ENCODE measurements at regions of chr11 and their contacts with region 1.

Region 1: DNA sequence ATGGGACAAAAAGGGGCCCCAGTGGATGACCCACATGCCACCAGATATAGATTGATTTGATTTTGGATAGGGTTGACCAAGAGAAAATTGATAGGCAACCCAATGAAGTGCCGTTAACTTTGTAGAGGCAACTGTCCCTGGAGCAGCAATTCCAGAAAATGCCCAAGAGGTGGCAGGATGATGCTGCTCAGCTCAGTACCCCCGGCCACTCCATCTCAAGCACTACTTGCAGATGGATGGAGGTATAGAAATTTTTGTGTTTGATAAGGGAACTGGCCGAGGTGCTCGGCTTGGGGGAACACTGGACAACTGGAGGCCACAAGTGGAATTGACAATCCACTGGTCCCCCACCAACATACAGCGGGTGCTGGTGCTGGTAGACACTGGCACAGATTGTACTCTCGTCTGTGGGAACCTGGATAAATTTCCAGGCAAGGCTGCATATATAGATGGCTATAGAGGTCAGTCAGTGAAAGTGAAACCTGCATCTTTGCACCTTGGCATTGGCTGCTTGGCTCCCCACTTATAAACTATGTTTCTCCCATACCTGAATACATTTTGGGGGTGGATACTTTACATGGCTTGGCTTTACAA is 86.3 kb downstream of the CCDC83 start:
- DNase-seq: peak; percentile 25 to 58
- ATAC-seq: peak; percentile 63 to 89 (median 80)
- H3K4me3 ChIP-seq: no peak overlapping the region
- H3K27ac ChIP-seq: no peak overlapping the region
- H3K4me1 ChIP-seq: peaks cover 1 to 22% (median 7%) of the 10 kb centered on the region in 9 donors
- H3K27me3 ChIP-seq: no peaks in the 10 kb centered on the region
- CTCF ChIP-seq: peak; percentile 41 to 87 (median 74)

Region 2: GRCh38 chr11:85902353-85902752 is 39.1 kb before region 1 on chr11:
- intact Hi-C with region 1: no loop called
- DNase-seq: no peak
- ATAC-seq: no peak
- H3K4me3 ChIP-seq: no peak overlapping the region
- H3K27ac ChIP-seq: no peak overlapping the region
- H3K4me1 ChIP-seq: peaks cover 0 to 7% (median 0%) of the 10 kb centered on the region in 9 donors
- H3K27me3 ChIP-seq: no peaks in the 10 kb centered on the region
- CTCF ChIP-seq: no peak

Region 3: GRCh38 chr11:86202013-86202336 is 260.5 kb after region 1 on chr11:
- intact Hi-C with region 1: loop called in 5 of 10 experiments (anchors 5 kb)
- DNase-seq: no peak
- ATAC-seq: peak in 6 of 8 donors; percentile 22 to 53 (median 37)
- H3K4me3 ChIP-seq: peak overlapping the region in 8 of 10 donors; percentile 25 to 46 (median 43)
- H3K27ac ChIP-seq: peak overlapping the region in 6 of 10 donors; percentile 34 to 84 (median 43)
- H3K4me1 ChIP-seq: peaks cover 0 to 65% (median 6%) of the 10 kb centered on the region in 9 donors
- H3K27me3 ChIP-seq: no peaks in the 10 kb centered on the region
- CTCF ChIP-seq: no peak

Region 4: GRCh38 chr11:86218125-86219084 is 276.9 kb after region 1 on chr11:
- intact Hi-C with region 1: loop called in 9 of 10 experiments (anchors 1 to 5 kb)
- DNase-seq: peak; percentile 52 to 77
- ATAC-seq: peak; percentile 83 to 96 (median 92)
- H3K4me3 ChIP-seq: peak overlapping the region in 9 of 10 donors; percentile 10 to 52 (median 40)
- H3K27ac ChIP-seq: peak overlapping the region in 3 of 10 donors; percentile 11 to 26 (median 22)
- H3K4me1 ChIP-seq: peaks cover 0 to 19% (median 7%) of the 10 kb centered on the region in 9 donors
- H3K27me3 ChIP-seq: no peaks in the 10 kb centered on the region
- CTCF ChIP-seq: peak; percentile 75 to 96 (median 91)

Region 5: GRCh38 chr11:86291466-86292262 is 350.2 kb after region 1 on chr11:
- intact Hi-C with region 1: loop called in 9 of 10 experiments (anchors 5 to 10 kb)
- DNase-seq: peak in 1 of 2 donors; percentile 31
- ATAC-seq: peak in 3 of 8 donors; percentile 20 to 39 (median 29)
- H3K4me3 ChIP-seq: no peak overlapping the region
- H3K27ac ChIP-seq: no peak overlapping the region
- H3K4me1 ChIP-seq: peaks cover 0 to 4% (median 0%) of the 10 kb centered on the region in 9 donors
- H3K27me3 ChIP-seq: no peaks in the 10 kb centered on the region
- CTCF ChIP-seq: peak; percentile 27 to 72 (median 64)

Measured in heart right ventricle (tissue), 16 donors.